CD4-positive, alpha-beta T cell (primary cell): ENCODE measurements at regions of chrX and their contacts with region 1.

Region 1: GRCh38 chrX:71532753-71533425 is at the start of gene OGT:
- DNase-seq: peak; percentile 85 to 98 (median 92)
- ATAC-seq: peak; percentile 72
- H3K4me3 ChIP-seq: peak within 1 kb of the TSS; percentile 97
- H3K4me3 Mint-ChIP-seq: peak within 1 kb of the TSS; percentile 99
- H3K27ac ChIP-seq: peak within 1 kb of the TSS; percentile 87 to 93
- H3K27ac Mint-ChIP-seq: peak within 1 kb of the TSS; percentile 98
- H3K4me1 ChIP-seq: peaks cover 21% of the 10 kb centered on the region
- H3K4me1 Mint-ChIP-seq: peaks cover 36% of the 10 kb centered on the region
- H3K27me3 ChIP-seq: no peaks in the 10 kb centered on the region
- H3K27me3 Mint-ChIP-seq: no peaks in the 10 kb centered on the region
- CTCF ChIP-seq: no peak
- total RNA-seq, gene OGT: 279 to 295 TPM

Region 2: DNA sequence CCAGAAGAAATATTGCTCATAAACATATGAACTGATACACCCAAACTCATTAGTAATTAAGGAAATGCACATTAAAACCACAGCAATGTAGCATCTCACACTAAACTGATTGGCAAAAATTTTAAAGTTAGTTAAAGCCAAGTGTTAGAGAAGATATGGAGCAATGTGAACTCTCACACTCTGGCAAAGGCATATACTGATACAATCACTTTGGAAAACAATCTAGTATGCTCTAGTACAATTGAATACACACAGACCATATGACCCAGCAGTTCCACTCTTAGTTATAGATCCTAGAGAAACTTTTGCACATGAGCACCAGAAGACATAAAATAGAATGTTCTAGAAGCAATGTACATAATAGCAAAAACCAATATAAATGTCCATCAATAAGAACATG is 1306.8 kb before region 1 on chrX:
- CTCF ChIA-PET with region 1: no interaction called
- POLR2A ChIA-PET with region 1: no interaction called
- intact Hi-C with region 1: no loop called
- DNase-seq: no peak
- ATAC-seq: no peak
- H3K4me3 ChIP-seq: no peak overlapping the region
- H3K4me3 Mint-ChIP-seq: no peak overlapping the region
- H3K27ac ChIP-seq: no peak overlapping the region
- H3K27ac Mint-ChIP-seq: no peak overlapping the region
- H3K4me1 ChIP-seq: no peaks in the 10 kb centered on the region
- H3K4me1 Mint-ChIP-seq: no peaks in the 10 kb centered on the region
- H3K27me3 ChIP-seq: no peaks in the 10 kb centered on the region
- H3K27me3 Mint-ChIP-seq: no peaks in the 10 kb centered on the region
- CTCF ChIP-seq: no peak

Region 3: DNA sequence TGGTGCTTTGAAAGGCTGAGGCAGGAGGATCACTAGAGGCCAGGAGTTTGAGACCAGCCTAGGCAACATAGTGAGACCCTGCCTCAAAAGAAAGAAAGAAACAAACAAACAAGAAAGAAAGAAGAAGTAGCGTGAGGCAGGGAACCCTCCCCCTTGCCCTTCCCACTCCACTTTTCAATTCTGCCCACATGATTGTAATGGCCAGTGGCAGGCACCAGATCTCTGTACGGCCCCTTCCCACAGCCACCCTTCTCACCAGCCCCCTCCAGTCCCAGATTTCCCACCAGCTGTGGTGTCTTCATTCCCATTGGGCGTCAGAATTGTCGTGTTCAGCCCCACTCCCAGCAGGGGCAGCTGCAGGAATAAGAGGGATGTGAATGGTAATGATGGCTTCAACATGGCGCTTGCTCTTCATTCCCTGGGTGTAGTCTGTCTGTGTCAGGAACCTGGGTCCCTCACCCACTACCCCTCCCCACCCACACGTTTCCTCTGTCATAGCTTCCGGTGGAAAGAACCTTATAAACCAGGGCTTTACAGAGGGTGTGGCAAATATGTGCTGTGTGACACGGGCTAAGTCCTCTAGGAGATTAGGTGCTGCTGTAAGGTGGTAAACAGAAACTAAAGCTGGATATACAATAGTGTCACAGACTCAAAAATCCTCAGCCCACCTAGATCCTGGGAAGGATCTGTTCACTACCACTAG is 421.6 kb before region 1 on chrX and contains the start of gene IL2RG:
- CTCF ChIA-PET with region 1: no interaction called
- POLR2A ChIA-PET with region 1: interaction called, 14 read pairs
- intact Hi-C with region 1: loop called in 1 of 2 experiments (anchors 5 kb)
- DNase-seq: peak; percentile 56 to 94 (median 70)
- ATAC-seq: peak; percentile 81
- H3K4me3 ChIP-seq: peak within 1 kb of the TSS; percentile 93
- H3K4me3 Mint-ChIP-seq: peak within 1 kb of the TSS; percentile 98
- H3K27ac ChIP-seq: peak within 1 kb of the TSS; percentile 96 to 99
- H3K27ac Mint-ChIP-seq: peak within 1 kb of the TSS; percentile 99
- H3K4me1 ChIP-seq: peaks cover 56% of the 10 kb centered on the region
- H3K4me1 Mint-ChIP-seq: peaks cover 51% of the 10 kb centered on the region
- H3K27me3 ChIP-seq: no peaks in the 10 kb centered on the region
- H3K27me3 Mint-ChIP-seq: no peaks in the 10 kb centered on the region
- CTCF ChIP-seq: no peak
- total RNA-seq, gene IL2RG: 213 to 225 TPM

Region 4: GRCh38 chrX:71254092-71254941 is 278.6 kb before region 1 on chrX and contains the start of gene ZMYM3:
- CTCF ChIA-PET with region 1: no interaction called
- POLR2A ChIA-PET with region 1: interaction called, 19 read pairs
- intact Hi-C with region 1: no loop called
- DNase-seq: peak; percentile 59 to 87 (median 75)
- ATAC-seq: peak; percentile 75
- H3K4me3 ChIP-seq: peak within 1 kb of the TSS; percentile 85
- H3K4me3 Mint-ChIP-seq: peak within 1 kb of the TSS; percentile 95
- H3K27ac ChIP-seq: peak within 1 kb of the TSS; percentile 72 to 84
- H3K27ac Mint-ChIP-seq: peak within 1 kb of the TSS; percentile 93
- H3K4me1 ChIP-seq: peaks cover 27% of the 10 kb centered on the region
- H3K4me1 Mint-ChIP-seq: peaks cover 29% of the 10 kb centered on the region
- H3K27me3 ChIP-seq: no peaks in the 10 kb centered on the region
- H3K27me3 Mint-ChIP-seq: no peaks in the 10 kb centered on the region
- CTCF ChIP-seq: no peak
- total RNA-seq, gene ZMYM3: 16.7 to 17.6 TPM

Region 5: GRCh38 chrX:71283403-71284143 is 249.3 kb before region 1 on chrX and contains the start of gene NONO:
- CTCF ChIA-PET with region 1: no interaction called
- POLR2A ChIA-PET with region 1: interaction called, 23 read pairs
- intact Hi-C with region 1: no loop called
- DNase-seq: peak; percentile 62 to 97 (median 78)
- ATAC-seq: peak; percentile 86
- H3K4me3 ChIP-seq: peak within 1 kb of the TSS; percentile 89
- H3K4me3 Mint-ChIP-seq: peak within 1 kb of the TSS; percentile 98
- H3K27ac ChIP-seq: peak within 1 kb of the TSS; percentile 85 to 97
- H3K27ac Mint-ChIP-seq: peak within 1 kb of the TSS; percentile 99
- H3K4me1 ChIP-seq: peaks cover 28% of the 10 kb centered on the region
- H3K4me1 Mint-ChIP-seq: peaks cover 34% of the 10 kb centered on the region
- H3K27me3 ChIP-seq: no peaks in the 10 kb centered on the region
- H3K27me3 Mint-ChIP-seq: no peaks in the 10 kb centered on the region
- CTCF ChIP-seq: no peak
- total RNA-seq, gene NONO: 440 to 472 TPM

Region 6: DNA sequence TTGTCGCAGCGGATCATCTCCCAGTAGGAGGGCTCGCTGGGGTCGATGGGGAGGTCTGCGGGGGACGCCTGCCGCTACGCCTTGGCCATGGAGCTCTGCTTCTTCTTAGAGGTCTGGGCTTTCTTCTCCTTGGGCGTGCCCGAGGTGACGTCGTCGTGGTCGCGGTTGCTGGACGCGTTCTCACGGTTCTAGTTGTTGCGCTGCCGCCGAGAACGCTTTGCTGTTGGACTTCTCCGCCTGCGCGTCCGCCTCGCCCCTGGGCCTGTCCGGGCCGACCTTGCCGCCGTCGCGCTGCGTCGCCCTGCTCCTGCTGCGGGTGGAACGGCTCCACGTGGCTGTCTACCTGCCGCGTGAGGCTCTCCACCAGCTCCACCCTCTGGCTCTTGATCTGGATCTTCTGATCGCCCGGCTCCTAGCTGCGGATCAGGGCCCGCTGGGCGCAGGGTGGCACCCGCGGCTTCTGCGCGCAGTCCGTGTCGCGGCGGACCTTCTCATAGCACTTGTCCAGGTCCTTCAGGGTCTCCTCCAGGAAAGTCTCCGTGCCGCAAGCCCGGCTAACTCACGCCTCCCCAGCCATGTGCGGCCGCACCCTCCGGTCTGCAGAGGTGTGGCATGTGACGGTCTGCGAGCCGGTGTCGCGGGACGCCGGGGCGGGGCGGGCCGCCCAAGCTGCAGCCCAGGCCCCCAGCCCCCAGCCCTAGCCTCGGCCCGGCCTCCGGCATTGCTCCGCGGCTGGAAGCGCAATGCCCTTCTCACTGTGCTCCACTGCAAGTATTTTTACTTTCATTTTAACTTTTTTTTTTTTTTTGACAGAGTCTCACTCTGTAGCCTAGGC is 40.4 kb before region 1 on chrX:
- CTCF ChIA-PET with region 1: no interaction called
- POLR2A ChIA-PET with region 1: interaction called, 83 read pairs
- intact Hi-C with region 1: loop called (anchors 5 kb)
- DNase-seq: peak; percentile 9 to 76 (median 29)
- ATAC-seq: peak; percentile 88
- H3K4me3 ChIP-seq: peak overlapping the region; percentile 69
- H3K4me3 Mint-ChIP-seq: peak overlapping the region; percentile 88
- H3K27ac ChIP-seq: no peak overlapping the region
- H3K27ac Mint-ChIP-seq: peak overlapping the region; percentile 61
- H3K4me1 ChIP-seq: peaks cover 10% of the 10 kb centered on the region
- H3K4me1 Mint-ChIP-seq: peaks cover 7% of the 10 kb centered on the region
- H3K27me3 ChIP-seq: no peaks in the 10 kb centered on the region
- H3K27me3 Mint-ChIP-seq: no peaks in the 10 kb centered on the region
- CTCF ChIP-seq: no peak

Region 7: DNA sequence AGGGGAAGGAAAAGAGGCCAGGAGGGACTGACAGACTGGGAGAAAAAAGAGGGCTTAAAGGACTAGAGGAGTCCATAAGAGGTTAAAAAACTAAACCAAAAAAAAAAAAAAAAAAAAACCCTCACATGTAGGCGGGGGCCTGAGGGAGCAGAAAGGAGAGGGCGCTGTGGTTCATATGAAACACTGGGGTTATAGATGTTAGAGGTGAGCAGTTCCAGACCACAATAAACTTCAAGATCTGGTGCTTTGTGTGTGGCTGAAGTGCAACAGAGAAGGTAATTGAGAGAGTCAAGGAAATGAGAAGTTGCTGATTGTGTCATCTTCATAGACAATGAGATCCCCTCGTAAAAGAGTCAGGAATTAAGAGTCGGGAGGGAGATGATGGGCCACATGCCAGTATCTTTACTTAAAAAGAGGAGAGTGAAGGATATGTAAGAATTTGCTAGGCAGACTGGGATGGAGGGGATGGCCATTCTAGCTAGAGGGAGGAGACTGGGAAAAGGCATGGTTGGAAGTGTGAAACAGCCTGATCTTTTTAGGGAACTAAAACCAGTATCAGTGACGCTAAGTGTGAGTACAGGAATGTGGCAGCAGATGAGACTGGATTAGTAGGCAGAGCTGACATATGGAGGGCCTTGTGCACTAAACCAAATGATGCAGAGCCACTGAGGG is 18.4 kb before region 1 on chrX:
- CTCF ChIA-PET with region 1: interaction called, 5 read pairs
- POLR2A ChIA-PET with region 1: interaction called, 9 read pairs
- intact Hi-C with region 1: loop called in 1 of 2 experiments (anchors 2 kb)
- DNase-seq: peak in 9 of 14 experiments; percentile 6 to 76 (median 38)
- ATAC-seq: peak; percentile 97
- H3K4me3 ChIP-seq: no peak overlapping the region
- H3K4me3 Mint-ChIP-seq: no peak overlapping the region
- H3K27ac ChIP-seq: no peak overlapping the region
- H3K27ac Mint-ChIP-seq: peak overlapping the region; percentile 16
- H3K4me1 ChIP-seq: peaks cover 2% of the 10 kb centered on the region
- H3K4me1 Mint-ChIP-seq: peaks cover 8% of the 10 kb centered on the region
- H3K27me3 ChIP-seq: no peaks in the 10 kb centered on the region
- H3K27me3 Mint-ChIP-seq: no peaks in the 10 kb centered on the region
- CTCF ChIP-seq: no peak

Region 8: DNA sequence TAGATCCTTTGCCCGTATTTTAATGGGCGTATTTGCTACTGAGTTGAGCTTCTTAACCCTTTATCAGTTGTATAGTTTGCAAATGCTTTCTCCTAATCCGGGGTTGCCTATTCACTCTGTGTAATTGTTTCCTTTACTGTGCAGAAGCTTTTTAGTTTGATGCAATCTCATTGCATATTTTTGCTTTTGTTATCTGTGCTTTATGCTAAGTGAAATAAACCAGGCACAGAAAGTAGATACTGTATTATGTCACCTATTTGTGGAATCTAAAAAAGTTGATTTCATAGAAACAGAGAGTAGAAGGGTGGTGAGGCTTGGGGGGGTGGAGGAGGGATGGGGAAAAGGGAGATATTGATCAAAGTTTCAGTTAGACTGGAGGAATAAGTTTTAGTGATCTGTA is 17.7 kb after region 1 on chrX:
- CTCF ChIA-PET with region 1: interaction called, 3 read pairs
- POLR2A ChIA-PET with region 1: interaction called, 34 read pairs
- intact Hi-C with region 1: no loop called
- DNase-seq: no peak
- ATAC-seq: no peak
- H3K4me3 ChIP-seq: no peak overlapping the region
- H3K4me3 Mint-ChIP-seq: no peak overlapping the region
- H3K27ac ChIP-seq: no peak overlapping the region
- H3K27ac Mint-ChIP-seq: no peak overlapping the region
- H3K4me1 ChIP-seq: peaks cover 13% of the 10 kb centered on the region
- H3K4me1 Mint-ChIP-seq: peaks cover 14% of the 10 kb centered on the region
- H3K27me3 ChIP-seq: no peaks in the 10 kb centered on the region
- H3K27me3 Mint-ChIP-seq: no peaks in the 10 kb centered on the region
- CTCF ChIP-seq: no peak

Region 9: DNA sequence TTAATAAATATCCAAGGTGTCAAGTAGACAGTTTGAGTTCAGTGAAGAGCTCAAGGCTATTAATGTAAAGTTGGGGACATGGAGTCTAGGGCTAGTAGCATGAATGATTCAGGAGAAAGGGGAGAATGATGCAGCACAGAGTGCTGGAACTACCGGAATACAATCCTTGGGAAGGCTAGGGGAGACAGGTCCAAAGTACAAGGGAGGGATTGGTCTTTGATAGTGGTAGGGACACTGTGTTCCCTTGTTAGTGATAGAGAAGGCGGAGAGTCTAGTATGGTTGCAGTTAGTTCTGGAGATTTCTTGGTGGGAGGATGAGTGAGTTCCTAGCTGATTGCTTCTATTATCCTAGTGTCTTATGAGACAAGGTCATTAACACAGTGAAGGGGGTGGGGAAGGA is 54.0 kb after region 1 on chrX:
- CTCF ChIA-PET with region 1: no interaction called
- POLR2A ChIA-PET with region 1: no interaction called
- intact Hi-C with region 1: no loop called
- DNase-seq: no peak
- ATAC-seq: no peak
- H3K4me3 ChIP-seq: no peak overlapping the region
- H3K4me3 Mint-ChIP-seq: no peak overlapping the region
- H3K27ac ChIP-seq: no peak overlapping the region
- H3K27ac Mint-ChIP-seq: peak overlapping the region; percentile 60
- H3K4me1 ChIP-seq: no peaks in the 10 kb centered on the region
- H3K4me1 Mint-ChIP-seq: no peaks in the 10 kb centered on the region
- H3K27me3 ChIP-seq: no peaks in the 10 kb centered on the region
- H3K27me3 Mint-ChIP-seq: no peaks in the 10 kb centered on the region
- CTCF ChIP-seq: no peak

Region 10: DNA sequence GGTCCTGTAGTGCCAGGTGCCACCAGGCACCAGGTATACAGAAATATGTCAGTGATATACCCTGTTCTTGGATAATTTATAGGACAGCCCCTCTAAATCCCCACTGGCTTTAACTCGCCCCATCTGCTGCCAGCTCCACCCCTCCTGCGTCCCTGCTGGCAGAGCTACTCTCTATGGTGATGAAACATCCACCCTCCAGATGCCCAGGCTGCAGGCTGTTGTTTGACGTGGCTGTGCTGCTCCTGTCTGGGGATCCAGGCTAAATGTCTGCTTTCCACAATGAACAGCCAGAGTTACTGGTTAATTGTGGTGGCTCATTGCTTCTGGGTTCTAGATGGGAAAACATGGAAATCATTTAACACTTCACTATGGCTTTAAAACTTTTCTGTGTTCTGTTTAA is 390.6 kb after region 1 on chrX:
- CTCF ChIA-PET with region 1: no interaction called
- POLR2A ChIA-PET with region 1: no interaction called
- intact Hi-C with region 1: no loop called
- DNase-seq: no peak
- ATAC-seq: no peak
- H3K4me3 ChIP-seq: no peak overlapping the region
- H3K4me3 Mint-ChIP-seq: no peak overlapping the region
- H3K27ac ChIP-seq: no peak overlapping the region
- H3K27ac Mint-ChIP-seq: no peak overlapping the region
- H3K4me1 ChIP-seq: no peaks in the 10 kb centered on the region
- H3K4me1 Mint-ChIP-seq: no peaks in the 10 kb centered on the region
- H3K27me3 ChIP-seq: no peaks in the 10 kb centered on the region
- H3K27me3 Mint-ChIP-seq: no peaks in the 10 kb centered on the region
- CTCF ChIP-seq: no peak

Region 11: DNA sequence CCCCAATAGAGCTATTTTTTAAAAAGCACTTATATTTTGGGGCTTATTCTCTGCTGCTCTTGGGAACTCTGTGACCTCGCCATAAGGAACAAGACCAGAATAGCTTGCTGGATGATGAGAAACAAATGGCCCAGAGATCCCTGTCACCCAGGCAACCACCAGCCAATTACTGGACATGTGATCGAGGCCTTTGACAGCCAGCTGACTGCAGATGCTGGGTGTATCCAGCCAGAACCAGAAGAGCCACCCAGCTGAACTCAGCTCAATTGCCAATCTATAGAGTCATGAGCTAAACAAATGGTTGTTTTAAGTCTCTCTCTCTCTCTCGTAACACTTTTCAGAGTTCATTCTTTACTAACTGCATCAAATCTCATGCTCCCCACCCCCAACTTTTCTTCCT is 797.2 kb after region 1 on chrX:
- CTCF ChIA-PET with region 1: no interaction called
- POLR2A ChIA-PET with region 1: no interaction called
- intact Hi-C with region 1: no loop called
- DNase-seq: no peak
- ATAC-seq: no peak
- H3K4me3 ChIP-seq: no peak overlapping the region
- H3K4me3 Mint-ChIP-seq: no peak overlapping the region
- H3K27ac ChIP-seq: no peak overlapping the region
- H3K27ac Mint-ChIP-seq: no peak overlapping the region
- H3K4me1 ChIP-seq: no peaks in the 10 kb centered on the region
- H3K4me1 Mint-ChIP-seq: peaks cover 7% of the 10 kb centered on the region
- H3K27me3 ChIP-seq: no peaks in the 10 kb centered on the region
- H3K27me3 Mint-ChIP-seq: no peaks in the 10 kb centered on the region
- CTCF ChIP-seq: no peak